ENCODE measurements at regions of chr11 and their contacts with region 1.

Region 1: GRCh38 chr11:10770626-10771254 is 19.7 kb downstream of the CTR9 start:
- DNase-seq: peak; percentile 31 to 48 (median 47)
- H3K4me3 ChIP-seq: no peak overlapping the region
- H3K27ac ChIP-seq: no peak overlapping the region
- H3K4me1 ChIP-seq: no peaks in the 10 kb centered on the region
- H3K27me3 ChIP-seq: no peaks in the 10 kb centered on the region

Region 2: GRCh38 chr11:10669258-10670033 is 101.3 kb before region 1 on chr11:
- CTCF ChIA-PET with region 1: no interaction called
- POLR2A ChIA-PET with region 1: no interaction called
- DNase-seq: peak in 1 of 3 donors; percentile 34
- H3K4me3 ChIP-seq: no peak overlapping the region
- H3K27ac ChIP-seq: no peak overlapping the region
- H3K4me1 ChIP-seq: peaks cover 6 to 56% (median 39%) of the 10 kb centered on the region in 4 experiments
- H3K27me3 ChIP-seq: no peaks in the 10 kb centered on the region

Region 3: GRCh38 chr11:10716127-10716526 is 54.6 kb before region 1 on chr11:
- CTCF ChIA-PET with region 1: no interaction called
- POLR2A ChIA-PET with region 1: no interaction called
- DNase-seq: no peak
- H3K4me3 ChIP-seq: no peak overlapping the region
- H3K27ac ChIP-seq: no peak overlapping the region
- H3K4me1 ChIP-seq: peaks cover 0 to 9% (median 2%) of the 10 kb centered on the region in 4 experiments
- H3K27me3 ChIP-seq: no peaks in the 10 kb centered on the region

Region 4: GRCh38 chr11:10784232-10785145 is 13.7 kb after region 1 on chr11:
- CTCF ChIA-PET with region 1: interaction called, 36 read pairs
- POLR2A ChIA-PET with region 1: no interaction called
- DNase-seq: no peak
- H3K4me3 ChIP-seq: no peak overlapping the region
- H3K27ac ChIP-seq: no peak overlapping the region
- H3K4me1 ChIP-seq: peaks cover 0 to 5% (median 2%) of the 10 kb centered on the region in 4 experiments
- H3K27me3 ChIP-seq: peaks cover 0 to 1% (median 0%) of the 10 kb centered on the region in 5 experiments

Region 5: GRCh38 chr11:10885703-10886363 is 115.1 kb after region 1 on chr11:
- CTCF ChIA-PET with region 1: no interaction called
- POLR2A ChIA-PET with region 1: no interaction called
- DNase-seq: no peak
- H3K4me3 ChIP-seq: no peak overlapping the region
- H3K27ac ChIP-seq: no peak overlapping the region
- H3K4me1 ChIP-seq: peaks cover 0 to 3% (median 0%) of the 10 kb centered on the region in 4 experiments
- H3K27me3 ChIP-seq: no peaks in the 10 kb centered on the region

Region 6: GRCh38 chr11:10975287-10975721 is 204.6 kb after region 1 on chr11:
- CTCF ChIA-PET with region 1: no interaction called
- POLR2A ChIA-PET with region 1: no interaction called
- DNase-seq: no peak
- H3K4me3 ChIP-seq: no peak overlapping the region
- H3K27ac ChIP-seq: no peak overlapping the region
- H3K4me1 ChIP-seq: peaks cover 0 to 8% (median 2%) of the 10 kb centered on the region in 4 experiments
- H3K27me3 ChIP-seq: no peaks in the 10 kb centered on the region

Measured in common myeloid progenitor, CD34-positive (primary cell).